ENCODE measurements at regions of chr1 and their contacts with region 1.

Region 1: DNA sequence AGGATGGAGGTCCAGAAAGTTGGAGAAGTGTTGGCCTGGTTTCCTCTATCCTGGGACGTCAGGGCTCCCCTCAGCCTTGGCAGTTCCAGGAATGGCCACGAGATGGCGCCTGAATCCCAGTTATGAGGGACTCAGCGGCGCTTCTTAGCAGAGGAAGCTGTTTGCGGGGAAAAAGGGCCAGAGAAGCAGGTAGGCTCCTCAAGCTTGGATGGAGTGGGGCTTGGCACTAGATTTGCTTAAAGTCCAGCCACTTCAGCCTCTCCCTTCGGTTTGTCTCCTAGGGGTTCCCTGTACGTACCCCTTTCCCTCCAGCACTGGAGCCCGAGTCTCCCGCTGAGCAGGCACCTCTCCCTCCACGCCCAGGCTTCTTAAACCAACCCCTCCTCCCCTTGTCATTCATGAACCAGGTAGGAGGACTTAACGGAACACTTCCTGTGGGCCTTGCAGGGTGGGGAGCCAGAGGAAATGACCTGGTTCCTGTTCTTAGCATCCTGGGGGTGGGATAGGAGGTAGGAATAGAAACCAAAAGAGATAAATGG is 32.0 kb upstream of the TENT5B start:
- H3K4me3 Mint-ChIP-seq: no peak overlapping the region
- H3K27ac Mint-ChIP-seq: no peak overlapping the region
- H3K4me1 Mint-ChIP-seq: peaks cover 11% of the 10 kb centered on the region
- H3K27me3 Mint-ChIP-seq: peaks cover 28% of the 10 kb centered on the region

Region 2: DNA sequence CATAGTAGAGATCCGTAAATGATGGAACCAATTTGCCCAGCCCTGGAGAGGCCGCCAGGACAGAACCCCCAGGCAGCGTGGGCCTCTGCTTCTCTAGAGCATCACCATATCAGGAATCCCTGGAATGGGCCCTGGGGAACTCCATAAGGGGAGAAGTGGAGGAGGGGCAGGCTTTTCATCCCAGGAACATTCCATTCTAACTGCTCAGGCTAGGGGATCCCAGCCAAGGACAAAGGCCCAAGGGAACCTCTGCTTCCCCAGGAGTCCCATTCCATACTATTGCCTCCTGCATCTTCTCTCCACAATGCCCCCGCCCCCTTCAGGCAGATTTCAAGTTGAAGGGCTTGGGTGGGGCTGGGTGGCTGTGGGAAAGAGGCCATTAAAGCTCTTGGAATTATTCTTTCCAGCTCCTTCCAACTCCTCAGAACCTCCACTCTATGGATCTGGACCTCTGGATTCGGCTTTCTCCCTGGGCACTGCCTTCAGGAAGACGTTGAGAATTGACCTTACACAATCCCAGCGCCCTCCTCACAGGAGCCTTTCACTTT is 45.2 kb before region 1 on chr1:
- intact Hi-C with region 1: loop called (anchors 5 kb)
- H3K4me3 Mint-ChIP-seq: no peak overlapping the region
- H3K27ac Mint-ChIP-seq: no peak overlapping the region
- H3K4me1 Mint-ChIP-seq: peaks cover 40% of the 10 kb centered on the region
- H3K27me3 Mint-ChIP-seq: peaks cover 30% of the 10 kb centered on the region